Astrocyte of the cerebellum (primary cell): ENCODE measurements at regions of chr1 and their contacts with region 1.

Region 1: DNA sequence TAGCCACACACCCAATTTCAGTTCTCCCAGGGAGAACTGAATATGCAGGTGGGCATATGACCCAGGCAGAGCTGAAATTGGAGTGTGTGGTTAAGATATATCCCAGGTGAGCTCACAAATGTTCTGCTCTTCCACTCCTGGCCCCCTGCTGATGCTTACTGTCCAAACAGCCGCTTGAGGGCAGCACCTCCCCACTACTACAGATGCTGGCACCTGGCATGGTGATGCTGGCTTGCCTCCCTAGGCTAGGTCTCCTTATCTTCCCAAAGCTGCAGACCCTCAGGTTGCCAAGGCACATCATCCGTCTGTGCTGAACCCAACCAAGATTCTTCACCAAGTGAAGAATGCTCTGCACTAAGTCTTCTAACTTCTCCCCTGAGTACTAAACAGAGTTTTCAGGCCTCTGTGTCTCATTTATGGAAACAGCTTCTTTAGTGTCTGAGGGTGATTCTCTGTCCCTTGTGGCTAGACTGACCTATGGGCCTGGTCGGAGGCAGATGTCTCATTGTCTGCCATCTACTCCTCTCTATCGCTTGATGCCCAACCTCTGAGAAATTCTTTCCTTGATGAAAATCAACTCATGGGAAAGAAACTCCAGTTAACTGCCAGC is 27.2 kb downstream of the XCL1 start:
- DNase-seq: peak; percentile 53
- H3K4me3 ChIP-seq: no peak overlapping the region
- CTCF ChIP-seq: peak; percentile 83

Region 2: DNA sequence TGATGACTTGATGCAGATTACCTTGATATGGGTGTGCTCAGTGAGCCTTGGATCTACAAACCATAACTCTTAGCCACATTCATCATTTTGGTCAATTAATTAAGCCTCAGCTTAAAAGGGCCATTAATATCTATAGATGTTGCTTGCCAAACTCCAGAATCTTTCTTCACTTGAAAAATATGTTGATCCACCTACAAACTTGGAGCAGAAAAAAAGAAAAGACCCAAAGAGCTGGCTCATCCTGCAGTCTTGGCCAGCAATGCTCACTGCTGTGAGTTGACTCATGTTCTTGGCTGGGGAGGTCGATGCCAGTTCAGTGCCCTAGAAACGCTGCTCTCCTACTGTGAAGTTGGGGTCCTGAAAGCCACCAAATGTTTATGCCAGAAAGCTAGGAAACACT is 50.0 kb after region 1 on chr1:
- in situ Hi-C with region 1: no loop called
- DNase-seq: no peak
- H3K4me3 ChIP-seq: no peak overlapping the region
- CTCF ChIP-seq: no peak

Region 3: GRCh38 chr1:169348383-169349036 is 744.9 kb after region 1 on chr1:
- in situ Hi-C with region 1: loop called (anchors 25 kb)
- DNase-seq: peak; percentile 52
- H3K4me3 ChIP-seq: no peak overlapping the region
- CTCF ChIP-seq: peak; percentile 49